WTC11 (cell line): ENCODE measurements at regions of chr9 and their contacts with region 1.

Region 1: GRCh38 chr9:97997330-97998276 is 14.5 kb downstream of the ANP32B start:
- DNase-seq: no peak
- ATAC-seq: no peak
- H3K4me3 Mint-ChIP-seq: no peak overlapping the region
- H3K27ac Mint-ChIP-seq: no peak overlapping the region
- H3K4me1 Mint-ChIP-seq: peaks cover 7% of the 10 kb centered on the region
- H3K27me3 Mint-ChIP-seq: no peaks in the 10 kb centered on the region
- CTCF ChIP-seq: no peak

Region 2: GRCh38 chr9:97982683-97983588 is 14.7 kb before region 1 on chr9 and contains the start of gene ANP32B:
- CTCF ChIA-PET with region 1: interaction called, 11 read pairs
- POLR2A ChIA-PET with region 1: no interaction called
- DNase-seq: peak; percentile 85
- ATAC-seq: peak; percentile 87
- H3K4me3 Mint-ChIP-seq: peak within 1 kb of the TSS; percentile 67
- H3K27ac Mint-ChIP-seq: no peak within 1 kb of the TSS
- H3K4me1 Mint-ChIP-seq: peaks cover 22% of the 10 kb centered on the region
- H3K27me3 Mint-ChIP-seq: peaks cover 64% of the 10 kb centered on the region
- CTCF ChIP-seq: peak; percentile 92
- total RNA-seq, gene ANP32B: 149 to 156 TPM (median 150 TPM) in 3 replicates